ENCODE measurements at regions of chr7 and their contacts with region 1.

Region 1: GRCh38 chr7:139620676-139621344 is 97.3 kb downstream of the CLEC2L start:
- DNase-seq: peak; percentile 13
- H3K4me3 ChIP-seq: no peak overlapping the region
- H3K27ac ChIP-seq: no peak overlapping the region
- H3K4me1 ChIP-seq: peaks cover 6% of the 10 kb centered on the region
- H3K27me3 ChIP-seq: no peaks in the 10 kb centered on the region
- CTCF ChIP-seq: peak; percentile 74 to 82 (median 80)

Region 2: DNA sequence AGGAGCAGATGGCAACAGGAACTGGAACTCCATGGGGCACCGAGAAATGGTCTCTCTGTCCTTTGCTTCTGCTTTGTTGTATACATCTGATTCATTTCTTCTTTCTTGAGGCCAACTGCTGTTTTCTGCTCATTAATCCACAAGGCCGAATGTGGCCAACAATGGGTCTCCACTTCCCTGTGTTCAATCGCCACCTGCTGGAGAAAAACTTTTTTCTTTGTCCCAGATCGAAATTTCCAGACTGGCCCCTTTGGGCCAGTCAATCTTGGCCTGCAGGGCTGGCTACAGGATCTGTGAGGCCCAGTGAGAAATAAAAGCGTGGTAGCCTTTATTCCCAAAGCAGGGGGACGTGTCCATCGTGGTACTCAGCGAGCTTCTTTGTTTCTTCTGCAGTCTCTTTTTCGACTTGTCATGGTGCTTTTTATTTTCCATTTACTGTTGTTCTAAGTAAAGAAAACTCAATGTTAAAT is 383.1 kb after region 1 on chr7:
- dilution Hi-C with region 1: loop called (anchors 25 kb)
- DNase-seq: peak; percentile 9
- H3K4me3 ChIP-seq: no peak overlapping the region
- H3K27ac ChIP-seq: no peak overlapping the region
- H3K4me1 ChIP-seq: peaks cover 6% of the 10 kb centered on the region
- H3K27me3 ChIP-seq: no peaks in the 10 kb centered on the region
- CTCF ChIP-seq: peak; percentile 48 to 63 (median 60)

Measured in keratinocyte (primary cell).